Naive thymus-derived CD4-positive, alpha-beta T cell (primary cell): ENCODE measurements at regions of chr7 and their contacts with region 1.

Region 1: GRCh38 chr7:150962553-150963399 is 15.3 kb downstream of the KCNH2 start:
- DNase-seq: peak; percentile 31 to 69 (median 53)
- ATAC-seq: peak; percentile 82
- H3K4me3 ChIP-seq: no peak overlapping the region
- H3K4me3 Mint-ChIP-seq: peak overlapping the region in 1 of 10 donors; percentile 51
- H3K27ac ChIP-seq: no peak overlapping the region
- H3K27ac Mint-ChIP-seq: no peak overlapping the region
- H3K4me1 ChIP-seq: no peaks in the 10 kb centered on the region
- H3K4me1 Mint-ChIP-seq: peaks cover 9 to 41% (median 24%) of the 10 kb centered on the region in 7 donors
- H3K27me3 ChIP-seq: no peaks in the 10 kb centered on the region
- H3K27me3 Mint-ChIP-seq: peaks cover 15 to 36% (median 20%) of the 10 kb centered on the region in 5 donors

Region 2: DNA sequence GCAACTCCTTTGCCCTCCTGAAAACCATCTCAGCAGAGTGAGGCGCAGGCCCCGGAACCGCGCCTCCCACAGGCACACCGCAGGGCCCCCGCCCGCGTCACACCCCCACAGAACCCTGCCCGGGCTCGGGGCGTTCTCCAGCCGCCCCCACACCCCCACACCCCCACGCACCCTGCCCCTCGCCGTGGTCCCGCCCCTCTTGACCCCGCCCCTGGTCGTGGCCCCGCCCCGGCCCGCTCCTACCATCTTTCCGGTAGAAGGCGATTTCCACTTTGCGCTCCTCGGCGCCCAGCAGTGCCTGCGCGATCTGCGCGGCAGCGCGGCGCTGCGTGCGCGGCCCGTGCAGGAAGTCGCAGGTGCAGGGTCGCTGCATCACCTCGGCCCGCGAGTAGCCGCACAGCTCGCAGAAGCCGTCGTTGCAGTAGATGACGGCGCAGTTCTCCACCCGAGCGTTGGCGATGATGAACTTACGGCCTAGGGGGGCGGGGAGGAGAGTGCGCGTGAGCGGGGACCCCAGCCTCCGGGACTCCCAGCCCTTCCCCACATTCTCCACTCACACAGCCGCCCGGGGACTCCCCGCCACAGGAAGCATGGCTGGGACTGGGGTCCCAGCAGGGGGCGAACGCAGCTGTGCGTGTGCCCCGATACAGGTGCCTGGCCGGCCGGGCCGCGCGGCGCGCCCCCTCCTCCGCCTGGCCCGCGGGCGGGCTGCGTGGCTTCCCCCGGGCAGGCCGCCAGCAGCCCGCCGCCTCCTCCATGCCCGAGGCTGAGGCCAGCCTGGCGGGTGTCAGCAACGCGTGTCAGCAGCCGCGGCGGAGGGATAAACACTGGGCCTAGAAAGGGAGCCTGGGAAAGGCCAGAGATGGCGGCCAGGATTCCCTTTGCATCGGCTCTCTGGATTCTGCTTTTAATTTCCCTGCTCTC is 12.0 kb after region 1 on chr7:
- CTCF ChIA-PET with region 1: interaction called, 9 read pairs
- POLR2A ChIA-PET with region 1: interaction called, 23 read pairs
- intact Hi-C with region 1: no loop called
- DNase-seq: peak; percentile 63 to 84 (median 80)
- ATAC-seq: peak; percentile 85
- H3K4me3 ChIP-seq: peak overlapping the region; percentile 63
- H3K4me3 Mint-ChIP-seq: peak overlapping the region; percentile 85 to 92 (median 88)
- H3K27ac ChIP-seq: peak overlapping the region; percentile 73
- H3K27ac Mint-ChIP-seq: peak overlapping the region; percentile 59 to 97 (median 95)
- H3K4me1 ChIP-seq: peaks cover 20 to 47% of the 10 kb centered on the region in 2 donors
- H3K4me1 Mint-ChIP-seq: peaks cover 33 to 62% (median 55%) of the 10 kb centered on the region in 7 donors
- H3K27me3 ChIP-seq: peaks cover 7 to 13% of the 10 kb centered on the region in 2 donors
- H3K27me3 Mint-ChIP-seq: peaks cover 9 to 36% (median 25%) of the 10 kb centered on the region in 5 donors